ENCODE measurements at regions of chr2 and their contacts with region 1.

Region 1: GRCh38 chr2:113756355-113757137 is at the start of gene SLC35F5:
- DNase-seq: peak; percentile 87
- H3K4me3 Mint-ChIP-seq: peak within 1 kb of the TSS; percentile 75
- H3K27ac Mint-ChIP-seq: peak within 1 kb of the TSS; percentile 95
- H3K4me1 Mint-ChIP-seq: peaks cover 6% of the 10 kb centered on the region
- H3K27me3 Mint-ChIP-seq: no peaks in the 10 kb centered on the region
- CTCF ChIP-seq: no peak
- total RNA-seq, gene SLC35F5: 52.7 and 64.9 TPM in 2 replicates

Region 2: GRCh38 chr2:113741091-113741490 is 15.5 kb before region 1 on chr2:
- CTCF ChIA-PET with region 1: no interaction called
- POLR2A ChIA-PET with region 1: interaction called, 14 read pairs
- intact Hi-C with region 1: no loop called
- DNase-seq: no peak
- H3K4me3 Mint-ChIP-seq: no peak overlapping the region
- H3K27ac Mint-ChIP-seq: no peak overlapping the region
- H3K4me1 Mint-ChIP-seq: peaks cover 6% of the 10 kb centered on the region
- H3K27me3 Mint-ChIP-seq: no peaks in the 10 kb centered on the region
- CTCF ChIP-seq: no peak

Region 3: GRCh38 chr2:113818382-113818951 is 61.9 kb after region 1 on chr2:
- CTCF ChIA-PET with region 1: no interaction called
- POLR2A ChIA-PET with region 1: interaction called, 22 read pairs
- intact Hi-C with region 1: no loop called
- DNase-seq: peak; percentile 93
- H3K4me3 Mint-ChIP-seq: peak overlapping the region; percentile 45
- H3K27ac Mint-ChIP-seq: peak overlapping the region; percentile 17
- H3K4me1 Mint-ChIP-seq: peaks cover 14% of the 10 kb centered on the region
- H3K27me3 Mint-ChIP-seq: no peaks in the 10 kb centered on the region
- CTCF ChIP-seq: no peak

Region 4: DNA sequence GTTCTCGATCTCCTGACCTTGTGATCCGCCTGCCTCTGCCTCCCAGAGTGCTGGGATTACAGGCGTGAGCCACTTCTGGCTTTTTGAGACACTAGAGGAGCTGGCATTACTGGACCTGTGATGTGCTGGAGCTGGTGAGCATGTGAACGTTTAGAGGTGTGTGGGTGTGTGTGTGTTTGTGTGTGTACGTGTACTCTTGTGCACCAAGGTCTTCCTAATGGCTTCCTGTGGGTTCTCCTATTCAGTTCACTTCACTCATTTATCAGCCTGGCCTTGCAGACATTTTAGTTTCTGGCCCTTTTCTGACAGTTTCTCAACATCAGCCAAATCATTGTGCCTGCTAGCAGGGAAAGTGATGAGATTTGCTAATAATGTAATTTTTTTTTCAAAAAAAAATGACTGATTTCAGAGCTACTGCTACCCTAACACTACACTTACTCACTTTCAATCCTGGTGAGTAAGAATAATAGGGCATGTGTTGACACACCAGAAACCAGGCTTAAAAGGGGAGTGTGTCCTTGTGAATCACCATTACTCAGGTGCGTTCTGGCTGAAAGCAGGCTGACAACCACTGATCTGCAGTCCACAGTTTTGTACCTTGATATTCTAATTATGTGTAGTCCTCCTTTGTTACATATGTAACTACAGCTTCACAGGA is 92.3 kb after region 1 on chr2:
- CTCF ChIA-PET with region 1: interaction called, 4 read pairs
- POLR2A ChIA-PET with region 1: interaction called, 151 read pairs
- intact Hi-C with region 1: no loop called
- DNase-seq: peak; percentile 83
- H3K4me3 Mint-ChIP-seq: no peak overlapping the region
- H3K27ac Mint-ChIP-seq: peak overlapping the region; percentile 29
- H3K4me1 Mint-ChIP-seq: peaks cover 12% of the 10 kb centered on the region
- H3K27me3 Mint-ChIP-seq: no peaks in the 10 kb centered on the region
- CTCF ChIP-seq: no peak

Region 5: GRCh38 chr2:113876503-113877387 is 120.2 kb after region 1 on chr2:
- CTCF ChIA-PET with region 1: no interaction called
- POLR2A ChIA-PET with region 1: interaction called, 15 read pairs
- intact Hi-C with region 1: no loop called
- DNase-seq: peak; percentile 84
- H3K4me3 Mint-ChIP-seq: no peak overlapping the region
- H3K27ac Mint-ChIP-seq: no peak overlapping the region
- H3K4me1 Mint-ChIP-seq: peaks cover 19% of the 10 kb centered on the region
- H3K27me3 Mint-ChIP-seq: no peaks in the 10 kb centered on the region
- CTCF ChIP-seq: no peak

Region 6: DNA sequence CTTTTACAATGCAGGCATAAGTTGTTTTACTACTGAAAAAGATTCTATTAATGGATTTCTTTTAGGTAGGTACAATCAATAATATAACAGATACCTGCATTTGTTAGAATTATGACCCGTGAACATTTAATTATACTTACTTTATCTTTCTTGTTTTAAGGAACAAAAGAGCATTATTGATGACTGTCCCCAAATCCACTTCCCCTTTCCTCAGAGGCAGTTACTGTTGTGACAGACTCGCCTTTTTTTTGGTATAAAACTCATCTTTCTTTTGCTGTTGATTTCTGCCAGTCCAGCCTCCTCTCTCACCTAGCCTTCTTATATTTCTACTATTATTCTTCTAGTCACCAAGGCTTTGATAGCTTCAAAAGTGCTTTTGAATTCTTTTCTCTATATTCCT is 145.4 kb after region 1 on chr2:
- CTCF ChIA-PET with region 1: interaction called, 4 read pairs
- POLR2A ChIA-PET with region 1: interaction called, 234 read pairs
- intact Hi-C with region 1: no loop called
- DNase-seq: no peak
- H3K4me3 Mint-ChIP-seq: no peak overlapping the region
- H3K27ac Mint-ChIP-seq: peak overlapping the region; percentile 55
- H3K4me1 Mint-ChIP-seq: peaks cover 38% of the 10 kb centered on the region
- H3K27me3 Mint-ChIP-seq: no peaks in the 10 kb centered on the region
- CTCF ChIP-seq: no peak

Region 7: DNA sequence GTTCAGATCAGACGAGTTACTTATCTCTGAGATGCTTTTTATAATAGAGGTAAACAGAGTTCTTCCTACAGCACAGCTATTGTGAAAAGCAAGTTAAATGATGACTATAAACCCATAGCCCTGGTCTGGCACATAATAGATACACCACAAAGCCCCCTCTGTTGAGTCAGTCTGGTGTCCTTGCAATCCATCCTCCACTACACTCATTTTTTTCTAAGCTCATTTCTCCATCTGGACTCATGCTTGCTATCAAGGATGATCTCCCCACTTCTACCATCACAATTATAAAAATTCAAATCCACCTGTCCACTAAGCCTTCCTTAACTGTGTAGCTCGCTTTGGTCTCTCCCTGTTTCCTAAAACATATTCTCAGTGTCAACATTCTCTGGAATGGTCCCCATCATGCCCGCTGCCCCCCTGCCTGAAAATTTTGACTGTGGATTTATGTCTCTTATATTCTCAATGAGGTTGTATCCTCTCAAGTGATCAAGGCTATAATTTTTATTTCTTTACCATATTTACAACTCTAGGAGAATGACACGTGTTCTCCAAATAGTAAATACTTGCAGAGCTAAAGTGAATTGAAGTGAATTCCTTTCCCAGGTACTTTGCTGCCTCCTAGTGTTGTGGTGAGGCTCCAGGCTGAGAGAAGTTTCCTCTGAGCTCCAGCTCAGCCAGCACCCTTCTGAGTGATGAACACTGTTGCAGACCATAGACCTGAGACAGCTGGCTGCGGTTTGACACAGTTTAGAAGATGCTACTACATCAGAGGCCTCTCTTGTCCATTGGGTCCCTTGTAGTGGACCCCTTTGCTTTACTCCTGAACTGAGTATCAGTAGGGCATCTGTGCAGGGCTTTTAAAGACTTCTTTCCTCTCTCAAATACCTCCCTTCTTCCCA is 794.6 kb after region 1 on chr2:
- CTCF ChIA-PET with region 1: no interaction called
- POLR2A ChIA-PET with region 1: interaction called, 6 read pairs
- intact Hi-C with region 1: loop called (anchors 2 kb)
- DNase-seq: peak; percentile 62
- H3K4me3 Mint-ChIP-seq: no peak overlapping the region
- H3K27ac Mint-ChIP-seq: no peak overlapping the region
- H3K4me1 Mint-ChIP-seq: no peaks in the 10 kb centered on the region
- H3K27me3 Mint-ChIP-seq: peaks cover 39% of the 10 kb centered on the region
- CTCF ChIP-seq: peak; percentile 78

Measured in MCF 10A (cell line).